ENCODE measurements at regions of chr11 and their contacts with region 1.

Region 1: GRCh38 chr11:66616379-66617154 is at the start of gene RBM14:
- DNase-seq: peak; percentile 99 to 100 (median 100)
- ATAC-seq: peak; percentile 98
- H3K4me3 ChIP-seq: peak within 1 kb of the TSS; percentile 94
- H3K27ac ChIP-seq: peak within 1 kb of the TSS; percentile 99
- H3K4me1 ChIP-seq: peaks cover 21 to 31% of the 10 kb centered on the region in 2 experiments
- H3K27me3 ChIP-seq: no peaks in the 10 kb centered on the region
- CTCF ChIP-seq: no peak
- EP300 ChIP-seq: peak; percentile 66
- POLR2A ChIP-seq: peak; percentile 100
- RAD21 ChIP-seq: 0 out of 4 replicates have a peak, but pooled peaks have one; percentile 4 to 8
- polyA plus RNA-seq, gene RBM14: 5.5 to 8.9 TPM

Region 2: GRCh38 chr11:66592457-66593302 is 23.9 kb before region 1 on chr11 and contains the starts of genes CCDC87 and CCS:
- CTCF ChIA-PET with region 1: no interaction called
- POLR2A ChIA-PET with region 1: interaction called, 5 read pairs
- in situ Hi-C with region 1: no loop called
- intact Hi-C with region 1: loop called (anchors 1 kb)
- DNase-seq: peak; percentile 97 to 100 (median 100)
- ATAC-seq: peak; percentile 96
- H3K4me3 ChIP-seq: peak within 1 kb of the TSS; percentile 75
- H3K27ac ChIP-seq: peak within 1 kb of the TSS; percentile 75
- H3K4me1 ChIP-seq: peaks cover 32 to 51% of the 10 kb centered on the region in 2 experiments
- H3K27me3 ChIP-seq: no peaks in the 10 kb centered on the region
- CTCF ChIP-seq: peak; percentile 96 to 99 (median 99)
- EP300 ChIP-seq: no peak
- POLR2A ChIP-seq: peak; percentile 94
- RAD21 ChIP-seq: peak; percentile 51 to 56; a peak in 3 of 4 replicates
- polyA plus RNA-seq, gene CCDC87: 0.03 TPM in 1 of 2 experiments, not detected in the other
- polyA plus RNA-seq, gene CCS: 1.1 to 3.0 TPM

Region 3: GRCh38 chr11:66694056-66694410 is 77.5 kb after region 1 on chr11:
- CTCF ChIA-PET with region 1: no interaction called
- POLR2A ChIA-PET with region 1: no interaction called
- in situ Hi-C with region 1: no loop called
- intact Hi-C with region 1: no loop called
- DNase-seq: no peak
- ATAC-seq: no peak
- H3K4me3 ChIP-seq: no peak overlapping the region
- H3K27ac ChIP-seq: no peak overlapping the region
- H3K4me1 ChIP-seq: peaks cover 0 to 23% of the 10 kb centered on the region in 2 experiments; a peak in 2 of 5 replicates
- H3K27me3 ChIP-seq: no peaks in the 10 kb centered on the region
- CTCF ChIP-seq: no peak
- EP300 ChIP-seq: no peak
- POLR2A ChIP-seq: no peak
- RAD21 ChIP-seq: no peak